ENCODE measurements at regions of chr16 and their contacts with region 1.

Region 1: DNA sequence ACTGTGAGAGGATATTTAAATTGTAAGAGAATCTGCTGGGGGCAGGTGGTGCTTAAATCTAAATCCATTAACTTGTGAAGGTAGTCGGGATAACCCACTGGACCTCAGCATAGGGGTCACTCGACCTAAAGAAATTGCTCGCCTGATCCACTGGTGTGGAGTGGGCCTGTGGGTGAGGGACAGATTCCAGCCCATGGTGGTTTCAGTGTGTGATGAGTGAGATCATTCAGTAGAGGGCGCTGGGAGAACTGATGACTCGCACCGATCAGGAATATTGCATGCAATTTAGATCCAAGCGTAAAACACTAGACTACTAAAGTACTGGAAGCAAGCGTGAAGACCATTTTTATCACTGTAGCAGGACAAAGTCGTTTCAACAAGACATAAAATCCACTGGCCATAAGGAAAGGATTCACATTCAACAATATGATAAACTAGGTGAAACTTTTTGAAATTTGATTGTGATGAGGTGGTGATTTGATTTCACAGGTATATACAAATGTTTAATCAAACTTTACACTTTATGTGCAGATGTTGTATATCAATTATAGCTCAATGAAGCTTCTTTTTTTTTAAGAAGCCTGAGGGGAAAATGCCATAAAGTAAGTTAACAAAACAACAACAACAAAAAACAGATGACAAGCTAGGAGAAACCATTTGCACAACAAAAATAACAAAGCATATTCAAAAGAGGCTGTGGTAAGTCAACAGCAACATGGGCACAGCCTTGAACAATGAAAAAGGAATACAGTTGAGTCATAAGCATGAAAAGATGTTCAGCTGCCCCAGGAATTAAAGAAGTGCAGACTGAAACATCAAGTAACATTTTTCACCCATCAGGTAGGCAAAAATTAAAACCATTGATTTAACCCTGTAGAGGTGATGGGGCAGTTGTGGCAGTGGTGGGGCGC is 7.5 kb upstream of the TMEM170A start:
- DNase-seq: no peak
- ATAC-seq: peak; percentile 97

Region 2: DNA sequence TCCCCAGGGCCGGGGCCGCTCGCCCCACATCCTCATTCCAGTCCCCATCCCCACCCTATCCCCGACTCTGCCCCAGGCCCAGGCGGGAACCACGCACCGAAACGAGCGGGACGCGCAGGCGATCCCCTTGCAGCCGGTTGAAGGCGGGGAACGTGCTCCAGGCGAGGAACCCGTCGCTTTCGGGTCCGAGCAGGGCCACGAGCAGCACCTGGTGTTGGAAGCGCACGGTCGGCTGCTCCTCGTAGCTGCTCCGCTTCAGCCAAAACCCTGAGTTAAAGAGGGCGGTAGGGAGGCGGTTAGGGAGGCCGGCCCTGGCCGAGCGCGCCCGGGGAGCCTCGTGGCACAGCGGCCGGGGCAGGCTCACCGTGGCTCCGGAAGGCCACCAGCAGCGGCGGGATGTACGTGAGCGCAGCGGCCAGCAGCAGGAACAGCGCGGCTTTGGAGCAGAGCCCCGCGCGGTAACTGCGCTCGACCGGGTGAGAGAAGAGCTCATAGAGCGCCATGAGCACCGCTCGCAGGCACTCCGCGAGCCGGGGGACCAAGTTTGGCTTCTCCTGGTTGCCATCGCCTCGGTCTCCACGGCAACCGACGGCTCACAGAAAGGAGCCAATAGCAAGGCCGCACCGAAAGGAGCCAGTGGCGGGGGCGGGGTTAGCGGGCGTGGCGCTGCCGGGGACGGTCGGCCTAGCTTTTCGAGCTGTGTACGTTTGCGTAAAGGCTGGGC is 83.9 kb after region 1 on chr16 and contains the start of gene TMEM231:
- intact Hi-C with region 1: loop called (anchors 10 kb)
- DNase-seq: peak; percentile 99
- ATAC-seq: peak; percentile 98
- total RNA-seq, gene TMEM231: 4.1 TPM

Region 3: DNA sequence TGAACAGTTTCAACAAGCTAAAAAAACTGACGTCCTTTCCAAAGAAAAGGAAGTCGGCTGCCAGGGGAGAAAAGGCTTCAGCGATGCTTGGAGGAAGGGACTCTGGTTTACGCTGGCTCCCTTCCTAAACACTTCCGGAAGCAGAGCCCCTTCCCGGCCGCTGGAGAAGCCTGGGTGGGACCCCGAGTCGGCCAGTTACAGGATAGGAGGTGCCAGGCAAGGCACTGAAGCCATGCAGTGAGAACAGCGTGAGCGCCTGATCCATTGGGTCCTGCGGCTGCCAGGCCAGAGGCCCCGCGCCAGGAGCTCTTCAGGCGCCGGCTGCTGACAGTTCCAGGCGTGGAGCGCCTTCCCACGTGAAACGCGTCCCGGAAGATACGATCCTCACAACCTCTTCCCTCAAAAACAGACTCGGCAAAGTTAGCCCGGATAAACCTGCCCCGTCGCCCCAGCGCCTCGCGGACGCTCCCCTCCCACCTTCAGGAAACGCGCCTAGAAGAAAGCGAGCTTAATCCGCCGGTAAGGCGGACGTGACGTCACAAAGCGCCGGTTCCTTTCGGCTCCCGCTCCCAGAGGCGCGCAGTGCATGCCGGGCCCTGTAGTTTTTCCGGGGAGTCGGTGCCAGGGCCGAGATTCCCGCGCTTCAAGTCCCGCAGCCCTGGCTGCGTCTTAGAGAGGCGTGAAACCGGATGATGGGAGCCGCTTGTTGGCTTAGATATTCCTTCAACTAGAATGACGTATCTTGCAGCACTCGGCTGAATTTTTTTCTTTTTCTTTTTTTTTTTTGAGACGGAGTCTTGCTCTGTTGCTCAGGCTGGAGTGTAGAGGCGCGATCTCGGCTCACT is 151.0 kb after region 1 on chr16 and contains the start of gene ADAT1:
- intact Hi-C with region 1: loop called (anchors 10 kb)
- DNase-seq: peak; percentile 99
- ATAC-seq: peak; percentile 97
- total RNA-seq, gene ADAT1: 19.3 TPM

Region 4: GRCh38 chr16:75653922-75654321 is 181.9 kb after region 1 on chr16:
- intact Hi-C with region 1: no loop called
- DNase-seq: no peak
- ATAC-seq: no peak

Region 5: DNA sequence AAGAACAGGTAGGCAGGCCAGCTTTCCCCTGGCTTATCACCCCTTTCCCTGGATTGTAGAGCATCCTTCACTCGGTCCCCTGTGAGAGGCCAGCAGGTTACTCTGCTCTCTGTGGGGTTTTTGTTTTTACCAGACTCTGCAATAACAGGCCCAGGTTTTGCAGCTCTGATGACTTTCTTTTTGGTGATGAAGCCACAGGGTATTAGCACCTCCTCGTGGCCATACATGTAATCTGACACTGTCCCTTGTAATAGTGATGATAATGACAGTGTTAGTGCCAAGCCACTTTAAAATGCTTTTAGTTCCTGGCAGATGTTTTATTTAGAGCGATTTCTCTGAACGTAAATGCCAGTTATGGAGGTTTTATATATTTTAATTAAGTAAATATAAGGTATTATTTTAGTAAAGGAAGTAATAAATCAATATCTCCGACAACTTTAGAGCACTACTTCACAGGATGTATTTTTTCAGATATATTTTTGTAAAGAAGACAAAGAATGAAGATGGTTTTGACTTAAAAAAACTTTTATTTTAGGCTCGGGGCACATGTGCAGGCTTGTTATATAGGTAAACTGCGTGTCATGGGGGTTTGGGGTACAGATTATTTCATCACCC is 292.3 kb after region 1 on chr16:
- intact Hi-C with region 1: loop called (anchors 5 kb)
- DNase-seq: no peak
- ATAC-seq: peak; percentile 87